ENCODE measurements at regions of chr19 and their contacts with region 1.

Region 1: GRCh38 chr19:55632463-55632834 is 8.1 kb upstream of the ZNF784 start:
- DNase-seq: peak; percentile 86 to 98
- H3K4me3 ChIP-seq: no peak overlapping the region
- H3K27ac ChIP-seq: peak overlapping the region in 1 of 2 donors; percentile 35
- H3K4me1 ChIP-seq: peaks cover 5 to 24% (median 23%) of the 10 kb centered on the region in 4 donors
- H3K27me3 ChIP-seq: no peaks in the 10 kb centered on the region
- CTCF ChIP-seq: peak; percentile 81 to 90

Region 2: DNA sequence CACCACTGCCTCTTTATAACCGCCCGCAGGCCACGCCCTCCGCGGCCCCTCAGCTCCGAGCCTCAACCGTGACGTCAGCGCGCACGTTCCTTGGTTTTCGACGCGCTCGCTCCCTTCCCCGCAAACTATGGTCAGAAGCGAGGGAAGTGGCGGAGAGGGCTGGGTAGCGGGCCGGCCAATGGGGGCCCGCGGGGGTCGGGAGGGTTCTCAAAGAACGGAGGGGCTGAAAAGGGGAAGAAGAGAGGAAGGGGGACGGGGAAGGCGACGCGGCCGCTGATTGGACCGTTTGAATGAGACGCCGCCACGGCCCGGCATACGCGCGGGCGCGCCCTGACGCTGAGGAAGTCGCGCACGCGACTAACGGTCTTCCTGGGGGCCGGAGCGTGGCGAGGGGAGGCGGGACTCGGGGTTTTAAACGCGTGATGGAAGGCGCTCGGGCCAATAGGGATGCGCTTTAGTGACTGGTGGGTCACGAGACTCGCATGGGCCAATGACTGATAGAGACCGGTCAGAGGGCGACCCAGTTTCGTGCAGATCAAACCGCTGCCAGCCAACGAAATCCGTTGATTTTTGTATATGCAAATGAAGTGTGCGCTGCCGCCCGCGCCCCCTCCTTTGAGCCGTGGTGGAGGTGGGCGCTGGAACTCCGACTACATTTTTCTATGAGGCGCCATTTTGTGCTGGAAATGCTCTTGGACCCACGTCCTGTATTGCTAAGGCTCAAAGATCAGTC is 224.5 kb before region 1 on chr19:
- intact Hi-C with region 1: loop called (anchors 10 kb)
- DNase-seq: peak; percentile 98 to 99
- H3K4me3 ChIP-seq: peak overlapping the region; percentile 72 to 92
- H3K27ac ChIP-seq: peak overlapping the region; percentile 97
- H3K4me1 ChIP-seq: peaks cover 8 to 24% (median 16%) of the 10 kb centered on the region in 4 donors
- H3K27me3 ChIP-seq: no peaks in the 10 kb centered on the region
- CTCF ChIP-seq: no peak

Region 3: DNA sequence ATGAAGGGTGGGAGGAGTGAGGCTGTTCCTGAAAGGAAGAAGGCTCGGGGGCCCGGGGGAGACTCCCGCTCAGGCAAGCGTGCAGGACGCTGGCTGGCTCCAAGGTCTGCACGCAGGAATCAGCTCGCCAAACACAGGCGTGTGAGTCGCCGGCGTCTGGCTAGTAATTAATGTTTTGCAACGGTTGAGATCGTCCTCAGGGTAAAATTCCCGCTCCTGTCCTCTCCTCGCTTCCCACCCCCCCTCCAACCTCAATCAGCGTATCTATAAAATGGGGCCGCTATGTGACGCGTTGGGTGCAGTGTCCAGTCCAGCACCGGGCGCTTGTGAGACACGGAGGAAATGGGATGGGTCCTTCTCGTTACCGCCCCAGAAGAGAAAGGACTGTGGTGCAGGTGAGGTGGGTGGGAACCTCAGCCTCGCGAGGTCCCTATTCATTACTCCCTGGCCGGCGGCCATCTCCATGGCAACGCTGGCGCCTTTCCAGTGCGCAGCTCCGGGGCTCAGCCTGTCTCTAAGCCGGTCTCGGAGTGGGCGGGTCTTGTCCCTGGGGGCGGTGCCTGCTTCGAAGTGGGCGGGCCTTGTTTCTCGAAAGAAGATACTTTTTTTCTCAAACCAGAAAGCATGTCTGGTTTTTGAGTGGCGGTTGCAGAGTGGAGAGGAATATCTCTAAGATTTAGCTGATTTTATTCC is 45.3 kb before region 1 on chr19:
- intact Hi-C with region 1: no loop called
- DNase-seq: peak; percentile 84 to 90
- H3K4me3 ChIP-seq: peak overlapping the region; percentile 31 to 46
- H3K27ac ChIP-seq: no peak overlapping the region
- H3K4me1 ChIP-seq: peaks cover 0 to 26% (median 16%) of the 10 kb centered on the region in 4 donors
- H3K27me3 ChIP-seq: peaks cover 0 to 25% of the 10 kb centered on the region in 2 donors
- CTCF ChIP-seq: no peak

Region 4: DNA sequence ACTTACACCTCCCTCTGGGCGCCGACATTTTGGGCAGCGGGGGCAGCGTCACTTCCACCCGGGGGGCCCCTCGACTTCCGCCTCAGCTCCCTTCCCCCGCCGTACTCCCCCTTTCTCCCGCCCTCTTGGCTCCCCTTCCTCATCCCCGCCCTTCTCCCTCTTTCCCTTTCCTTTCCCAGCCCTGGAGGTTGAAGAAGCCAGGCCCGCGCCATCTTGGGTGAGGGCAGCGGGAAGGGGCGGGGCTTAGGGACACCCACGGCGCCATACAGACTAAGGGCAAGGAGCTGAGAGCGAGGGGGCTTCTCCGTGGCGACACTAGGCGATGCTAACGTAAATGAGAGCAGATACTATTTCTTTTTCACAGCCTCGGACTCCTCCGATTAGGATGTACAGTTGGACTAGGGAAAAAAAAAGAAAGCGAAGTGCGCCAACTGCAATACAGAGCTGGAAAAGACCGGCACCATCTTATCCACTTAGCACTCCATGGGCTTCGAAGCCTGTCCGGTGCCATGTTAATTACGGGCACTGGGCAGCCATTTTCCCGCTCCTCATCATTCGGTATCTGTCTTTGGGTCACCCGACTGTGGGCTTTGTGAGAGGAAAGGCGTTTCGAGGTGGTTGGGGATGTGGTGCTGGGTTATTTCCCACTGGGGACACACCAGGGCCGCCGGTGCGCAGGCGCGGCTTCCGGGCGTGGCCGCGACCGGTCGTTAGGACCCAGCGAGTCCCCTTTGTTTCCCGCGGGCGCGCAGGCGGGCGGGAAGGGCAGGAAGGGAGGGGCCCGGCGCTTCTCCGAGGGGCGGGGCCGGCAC is 32.8 kb before region 1 on chr19 and contains the start of gene FIZ1:
- intact Hi-C with region 1: loop called (anchors 5 kb)
- DNase-seq: peak; percentile 99 to 100
- H3K4me3 ChIP-seq: peak within 1 kb of the TSS; percentile 74 to 75
- H3K27ac ChIP-seq: peak within 1 kb of the TSS; percentile 93 to 95
- H3K4me1 ChIP-seq: peaks cover 3 to 30% (median 14%) of the 10 kb centered on the region in 4 donors
- H3K27me3 ChIP-seq: no peaks in the 10 kb centered on the region
- CTCF ChIP-seq: no peak

Measured in tibial artery (tissue), 4 donors.